HepG2 (cell line): ENCODE measurements at regions of chr4 and their contacts with region 1.

Region 1: DNA sequence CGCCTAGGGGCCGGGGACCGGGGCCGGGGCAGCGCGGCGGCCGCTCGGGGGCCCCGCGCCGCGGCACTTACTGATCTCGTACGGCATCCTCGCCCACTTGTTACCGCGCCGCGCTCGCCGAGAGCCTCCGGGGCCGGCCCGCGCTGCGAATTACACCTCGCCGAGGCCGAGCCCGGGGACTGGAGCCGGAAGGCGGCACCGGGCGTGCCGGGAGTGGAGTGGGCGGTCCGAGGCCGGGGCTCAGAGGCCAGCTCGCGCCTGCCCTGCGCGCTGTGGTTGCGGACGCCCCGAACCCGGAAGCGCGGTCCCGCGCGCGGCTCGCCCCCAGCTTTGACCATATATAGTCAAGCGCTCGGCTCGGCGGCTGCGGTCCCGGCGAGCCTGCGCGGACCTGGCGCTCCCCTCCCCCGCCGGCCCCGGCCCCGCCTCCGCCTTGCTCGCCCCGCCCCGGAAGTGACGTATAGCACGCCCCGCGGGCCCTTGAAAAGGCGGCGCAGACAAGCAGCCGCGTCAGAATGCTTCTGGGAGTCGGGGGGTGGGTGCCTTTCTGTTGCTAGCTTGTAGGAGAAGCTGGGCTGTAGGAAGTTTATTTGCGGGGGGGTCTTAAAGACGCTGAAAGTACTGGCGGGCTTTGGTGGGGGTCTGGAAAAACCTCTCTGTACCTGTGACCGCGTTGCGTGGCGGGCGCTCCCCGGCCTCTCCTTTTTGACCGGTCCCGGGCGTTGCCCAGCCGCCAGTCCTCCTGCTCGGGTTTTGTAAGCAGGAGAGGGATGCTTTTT is at the start of gene WDR1:
- DNase-seq: peak; percentile 89
- ATAC-seq: peak; percentile 86
- H3K4me3 ChIP-seq: peak within 1 kb of the TSS; percentile 82 to 93 (median 88)
- H3K27ac ChIP-seq: peak within 1 kb of the TSS; percentile 85
- H3K4me1 ChIP-seq: peaks cover 89% of the 10 kb centered on the region
- H3K27me3 ChIP-seq: no peaks in the 10 kb centered on the region
- CTCF ChIP-seq: no peak
- EP300 ChIP-seq: peak in 1 of 2 experiments; percentile 10; a peak in 1 of 4 replicates
- POLR2A ChIP-seq: peak in 1 of 2 experiments; percentile 97; a peak in 2 of 4 replicates
- RAD21 ChIP-seq: 0 out of 2 replicates have a peak, but pooled peaks have one; percentile 21
- total RNA-seq, gene WDR1: 106 and 120 TPM in 2 replicates

Region 2: DNA sequence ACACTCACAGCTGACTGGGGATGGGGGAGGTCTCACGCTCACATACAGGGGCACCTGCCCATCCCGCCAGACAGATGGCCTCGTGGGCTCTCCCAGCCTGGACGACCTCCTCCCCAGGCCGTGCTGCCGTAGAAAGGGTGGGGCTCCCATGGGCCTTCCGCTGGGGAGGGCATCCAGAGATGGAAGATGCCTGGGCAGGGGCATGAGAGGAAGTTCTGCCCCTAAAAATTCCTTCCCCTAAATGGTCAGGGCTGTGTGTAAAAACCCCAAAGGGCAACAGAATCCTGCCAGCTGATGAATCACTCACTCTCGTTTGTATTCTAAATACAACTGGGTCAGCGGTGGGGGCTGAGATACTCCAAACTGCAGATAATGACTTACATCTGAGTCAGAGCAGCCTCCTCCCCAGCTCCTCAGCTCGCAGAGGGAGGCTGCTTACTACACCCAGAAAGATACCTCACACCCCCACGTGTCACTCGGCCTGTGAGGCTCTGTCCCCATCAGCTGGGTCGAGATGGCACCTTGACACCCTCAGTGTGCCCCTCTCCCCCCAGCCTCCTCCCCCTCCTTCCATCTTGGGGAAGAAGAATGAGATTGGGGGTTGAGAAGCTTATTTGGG is 10.2 kb before region 1 on chr4:
- CTCF ChIA-PET with region 1: no interaction called
- POLR2A ChIA-PET with region 1: interaction called, 29 read pairs
- in situ Hi-C with region 1: no loop called
- intact Hi-C with region 1: no loop called
- DNase-seq: no peak
- ATAC-seq: peak; percentile 5; the same call in 2 of the 3 replicates
- H3K4me3 ChIP-seq: no peak overlapping the region
- H3K27ac ChIP-seq: no peak overlapping the region
- H3K4me1 ChIP-seq: peaks cover 66% of the 10 kb centered on the region
- H3K27me3 ChIP-seq: no peaks in the 10 kb centered on the region; a peak in 1 of 5 replicates
- CTCF ChIP-seq: no peak
- EP300 ChIP-seq: no peak
- POLR2A ChIP-seq: no peak
- RAD21 ChIP-seq: no peak

Region 3: DNA sequence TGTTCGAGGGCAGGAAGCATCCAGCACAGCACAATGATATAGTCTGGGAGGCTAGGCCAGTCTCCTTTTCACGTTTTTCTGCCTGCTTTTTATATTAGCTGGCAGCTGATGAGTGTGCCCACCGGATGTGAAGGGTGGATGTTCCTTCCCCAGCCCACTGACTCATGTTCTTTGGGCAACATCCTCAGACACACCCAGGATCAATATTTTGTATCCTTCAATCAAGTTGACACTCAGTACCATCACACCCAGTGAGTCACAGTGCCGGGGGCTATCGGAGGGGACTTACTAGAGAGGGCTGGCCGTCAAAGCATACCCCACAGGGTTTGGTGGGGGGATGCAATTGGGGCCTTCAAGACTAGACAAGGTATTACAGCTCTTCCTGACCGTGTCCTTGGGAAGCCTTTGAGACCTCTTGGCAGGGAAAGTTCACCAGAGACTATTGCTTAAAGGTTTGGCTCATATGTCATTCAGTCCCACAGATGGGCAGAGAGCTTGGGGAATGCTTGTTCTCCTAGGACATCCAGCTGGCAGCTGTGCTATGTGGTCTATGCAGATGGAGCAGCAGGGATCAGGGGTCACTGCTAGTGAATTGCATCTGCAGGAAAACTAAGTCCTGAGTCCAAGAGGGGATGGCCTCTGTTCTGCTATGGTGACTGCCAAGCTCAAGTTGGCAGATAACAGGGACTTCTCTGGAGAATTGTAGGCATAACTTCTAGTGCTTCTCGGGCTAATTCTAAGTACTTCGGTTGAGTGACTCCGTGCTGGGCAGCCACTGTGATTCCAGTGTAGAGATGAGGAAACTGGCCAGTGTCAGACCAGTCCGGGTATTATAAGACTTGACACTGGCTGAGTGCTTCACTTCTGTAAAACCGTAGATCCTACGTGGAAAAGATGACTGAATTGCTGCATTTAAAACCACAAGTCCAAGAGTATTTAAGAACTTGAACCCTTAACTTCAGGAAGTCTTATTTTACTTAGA is 12.7 kb after region 1 on chr4:
- CTCF ChIA-PET with region 1: no interaction called
- POLR2A ChIA-PET with region 1: interaction called, 26 read pairs
- in situ Hi-C with region 1: no loop called
- intact Hi-C with region 1: no loop called
- DNase-seq: no peak
- ATAC-seq: peak; percentile 78
- H3K4me3 ChIP-seq: no peak overlapping the region
- H3K27ac ChIP-seq: no peak overlapping the region
- H3K4me1 ChIP-seq: peaks cover 24% of the 10 kb centered on the region
- H3K27me3 ChIP-seq: peaks cover 0 to 7% of the 10 kb centered on the region in 2 experiments; a peak in 1 of 5 replicates
- CTCF ChIP-seq: no peak
- EP300 ChIP-seq: no peak
- POLR2A ChIP-seq: no peak
- RAD21 ChIP-seq: no peak